Activated CD4-positive, alpha-beta memory T cell treated with anti-CD3 and anti-CD28 coated beads for 36 hours (primary cell): ENCODE measurements at regions of chr6 and their contacts with region 1.

Region 1: GRCh38 chr6:151409260-151409659 is 17.9 kb upstream of the ZBTB2 start:
- DNase-seq: no peak
- H3K4me3 Mint-ChIP-seq: no peak overlapping the region
- H3K27ac Mint-ChIP-seq: no peak overlapping the region
- H3K4me1 Mint-ChIP-seq: peaks cover 12% of the 10 kb centered on the region
- H3K27me3 Mint-ChIP-seq: no peaks in the 10 kb centered on the region

Region 2: DNA sequence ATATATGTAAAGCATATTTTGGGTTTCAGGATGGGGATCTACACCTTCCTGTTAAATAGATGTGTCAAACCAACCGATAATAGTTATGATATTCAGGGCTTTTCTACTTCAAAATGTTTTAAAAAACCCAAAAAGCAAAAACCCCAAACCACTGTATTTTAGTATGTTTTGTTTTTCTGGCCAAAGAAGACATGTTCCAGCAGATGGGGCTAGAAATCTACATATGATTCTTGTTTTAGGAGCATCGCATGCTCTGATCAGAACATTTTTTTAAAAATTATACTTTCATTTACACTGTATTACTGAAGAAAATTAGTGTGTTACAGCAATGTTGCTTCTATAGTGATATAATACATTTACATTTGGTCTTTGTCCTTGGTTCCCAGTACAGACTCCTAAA is 31.7 kb after region 1 on chr6:
- CTCF ChIA-PET with region 1: interaction called, 11 read pairs
- POLR2A ChIA-PET with region 1: no interaction called
- intact Hi-C with region 1: no loop called
- DNase-seq: no peak
- H3K4me3 Mint-ChIP-seq: no peak overlapping the region
- H3K27ac Mint-ChIP-seq: no peak overlapping the region
- H3K4me1 Mint-ChIP-seq: peaks cover 43% of the 10 kb centered on the region
- H3K27me3 Mint-ChIP-seq: no peaks in the 10 kb centered on the region

Region 3: GRCh38 chr6:151475653-151476523 is 66.6 kb after region 1 on chr6:
- CTCF ChIA-PET with region 1: interaction called, 9 read pairs
- POLR2A ChIA-PET with region 1: no interaction called
- intact Hi-C with region 1: loop called (anchors 5 kb)
- DNase-seq: peak; percentile 38
- H3K4me3 Mint-ChIP-seq: no peak overlapping the region
- H3K27ac Mint-ChIP-seq: no peak overlapping the region
- H3K4me1 Mint-ChIP-seq: peaks cover 5% of the 10 kb centered on the region
- H3K27me3 Mint-ChIP-seq: no peaks in the 10 kb centered on the region